Ascending aorta (tissue), 2 donors: ENCODE measurements at regions of chr4 and their contacts with region 1.

Region 1: DNA sequence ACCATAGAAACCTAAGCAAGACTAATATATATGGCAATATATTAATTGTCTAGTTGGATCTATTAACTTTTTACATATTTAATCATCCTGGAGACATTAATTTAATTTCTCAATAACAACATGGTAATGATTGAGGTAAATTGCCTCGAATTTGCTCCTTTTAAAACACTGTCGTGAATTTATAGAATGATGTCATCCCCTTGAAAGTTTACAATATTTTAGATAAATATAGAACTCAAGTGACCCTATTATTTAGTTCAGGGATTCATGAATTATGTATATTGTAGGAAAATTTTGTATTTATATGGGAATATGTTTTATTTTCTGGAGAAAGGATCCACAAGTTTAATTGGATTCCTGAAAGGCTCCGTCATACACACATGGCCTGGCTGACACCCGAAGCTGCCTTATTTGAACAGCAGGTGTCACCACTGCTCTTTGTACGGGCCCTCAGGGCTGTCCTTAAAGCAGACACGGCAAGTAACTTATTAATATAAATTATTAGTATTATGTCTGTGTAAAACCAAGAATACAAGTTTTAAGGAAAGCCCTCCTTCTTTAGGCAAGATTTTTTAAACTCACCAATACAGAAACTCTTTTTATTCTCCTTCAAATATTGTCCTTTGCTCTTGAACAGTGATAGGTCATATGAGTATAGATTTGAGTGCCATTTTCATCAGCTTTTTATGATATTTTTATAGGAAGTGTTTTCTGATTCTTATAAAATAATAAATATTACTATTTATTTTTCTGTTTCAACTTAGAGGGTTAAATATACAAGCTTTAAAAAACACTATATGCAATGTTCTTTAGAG is 1.9 kb upstream of the PLRG1 start:
- DNase-seq: peak; percentile 19 to 84
- H3K4me3 ChIP-seq: no peak overlapping the region
- H3K27ac ChIP-seq: peak overlapping the region in 1 of 2 donors; percentile 4
- H3K4me1 ChIP-seq: peaks cover 3 to 9% of the 10 kb centered on the region in 2 donors
- H3K27me3 ChIP-seq: no peaks in the 10 kb centered on the region
- CTCF ChIP-seq: peak; percentile 64 to 86 (median 81)

Region 2: DNA sequence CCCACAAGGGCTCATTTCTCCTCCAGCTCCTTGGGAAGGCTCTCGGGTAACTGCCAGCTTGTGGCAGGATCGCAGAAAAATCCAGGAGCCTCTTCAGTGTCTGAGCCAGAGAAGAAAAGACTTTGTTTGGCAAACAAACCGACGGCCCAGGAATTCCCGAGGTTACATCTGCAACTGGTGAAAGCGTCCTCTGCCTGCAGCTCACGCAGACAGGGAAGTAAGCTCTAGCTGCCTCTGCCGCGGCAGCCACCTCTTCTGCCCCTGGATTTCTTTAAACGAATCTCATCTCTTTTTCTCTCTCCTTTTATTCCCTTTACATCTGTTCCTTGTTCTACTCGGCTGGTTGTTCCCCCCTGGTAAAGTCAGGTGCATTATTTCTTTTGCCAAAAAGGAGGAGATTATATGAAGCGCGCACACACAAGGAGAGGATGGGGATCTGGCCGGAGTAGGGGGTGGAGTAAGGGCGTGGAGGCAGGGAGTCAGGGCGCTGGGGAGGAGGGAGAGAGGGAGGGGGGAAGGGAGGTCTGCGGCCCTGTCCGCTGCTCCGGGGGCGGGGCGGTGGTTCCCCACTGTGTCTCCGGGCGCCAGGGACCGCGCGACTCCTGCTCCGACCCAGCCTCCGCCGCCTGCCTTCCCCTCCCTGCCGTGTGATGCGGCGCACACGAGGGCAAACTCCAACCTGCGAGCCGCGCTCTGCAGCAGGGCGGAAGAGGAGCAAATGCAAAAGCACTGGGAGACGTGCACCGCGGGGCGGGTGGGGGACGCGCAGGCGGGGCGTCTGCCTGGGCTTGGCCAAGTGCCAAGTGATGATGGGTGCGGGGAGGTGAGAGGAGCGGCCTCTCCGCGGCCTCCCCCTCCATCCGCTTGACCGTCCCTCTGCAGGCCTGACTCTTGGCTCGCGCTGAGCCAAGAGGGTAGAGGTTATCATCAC is 60.5 kb before region 1 on chr4 and contains the start of gene DCHS2:
- intact Hi-C with region 1: no loop called
- DNase-seq: no peak
- H3K4me3 ChIP-seq: peak within 1 kb of the TSS; percentile 32 to 40
- H3K27ac ChIP-seq: no peak within 1 kb of the TSS
- H3K4me1 ChIP-seq: no peaks in the 10 kb centered on the region
- H3K27me3 ChIP-seq: peaks cover 13% of the 10 kb centered on the region
- CTCF ChIP-seq: no peak
- total RNA-seq, gene DCHS2: not detected

Region 3: GRCh38 chr4:154618708-154619315 is 66.7 kb after region 1 on chr4:
- intact Hi-C with region 1: loop called (anchors 1 kb)
- DNase-seq: no peak
- H3K4me3 ChIP-seq: no peak overlapping the region
- H3K27ac ChIP-seq: no peak overlapping the region
- H3K4me1 ChIP-seq: no peaks in the 10 kb centered on the region
- H3K27me3 ChIP-seq: no peaks in the 10 kb centered on the region
- CTCF ChIP-seq: peak in 2 of 3 experiments; percentile 43 to 45

Region 4: GRCh38 chr4:154743683-154744340 is 191.7 kb after region 1 on chr4 and contains the start of gene LRAT:
- intact Hi-C with region 1: loop called (anchors 2 kb)
- DNase-seq: peak in 1 of 2 donors; percentile 71
- H3K4me3 ChIP-seq: peak within 1 kb of the TSS; percentile 51 to 65
- H3K27ac ChIP-seq: no peak within 1 kb of the TSS
- H3K4me1 ChIP-seq: peaks cover 3 to 4% of the 10 kb centered on the region in 2 donors
- H3K27me3 ChIP-seq: no peaks in the 10 kb centered on the region
- CTCF ChIP-seq: no peak
- total RNA-seq, gene LRAT: not detected

Region 5: DNA sequence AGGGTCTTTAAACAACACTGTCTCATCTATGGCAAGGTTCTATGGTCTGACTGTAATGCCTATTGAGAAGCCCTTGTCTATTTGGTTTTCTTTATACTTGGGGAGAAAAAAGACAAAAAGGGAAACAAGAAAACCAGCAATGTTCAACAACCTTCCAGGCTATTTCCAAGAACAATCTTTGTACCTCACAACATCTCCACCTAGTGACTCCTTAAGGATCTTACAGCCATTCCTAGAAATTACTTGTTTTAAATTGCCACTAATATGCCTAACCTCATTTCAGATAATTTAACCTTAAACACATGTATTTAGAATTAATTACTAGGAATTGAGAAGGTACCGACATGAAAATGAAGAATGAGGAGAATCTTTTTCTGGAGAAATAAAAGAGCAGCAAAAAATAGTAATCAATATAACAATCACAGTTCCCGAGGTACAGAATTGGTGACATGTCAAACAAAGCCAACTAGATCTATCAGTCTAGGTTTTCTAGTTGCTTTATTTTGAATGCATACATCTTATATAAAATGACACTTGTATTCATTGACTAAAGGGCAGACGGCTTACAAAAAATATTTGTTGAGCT is 227.4 kb after region 1 on chr4:
- intact Hi-C with region 1: loop called (anchors 5 kb)
- DNase-seq: no peak
- H3K4me3 ChIP-seq: no peak overlapping the region
- H3K27ac ChIP-seq: no peak overlapping the region
- H3K4me1 ChIP-seq: no peaks in the 10 kb centered on the region
- H3K27me3 ChIP-seq: no peaks in the 10 kb centered on the region
- CTCF ChIP-seq: peak in 2 of 3 experiments; percentile 20 to 41